GM13977 (cell line): ENCODE measurements at regions of chr12 and their contacts with region 1.

Region 1: GRCh38 chr12:38332814-38333213 is 16.2 kb downstream of the ALG10B start:
- DNase-seq: no peak
- CTCF ChIP-seq: no peak

Region 2: GRCh38 chr12:38399711-38400206 is 66.9 kb after region 1 on chr12:
- in situ Hi-C with region 1: no loop called
- DNase-seq: no peak
- CTCF ChIP-seq: no peak

Region 3: GRCh38 chr12:38664661-38665269 is 332.0 kb after region 1 on chr12:
- in situ Hi-C with region 1: loop called (anchors 25 kb)
- DNase-seq: no peak
- CTCF ChIP-seq: peak; percentile 64

Region 4: DNA sequence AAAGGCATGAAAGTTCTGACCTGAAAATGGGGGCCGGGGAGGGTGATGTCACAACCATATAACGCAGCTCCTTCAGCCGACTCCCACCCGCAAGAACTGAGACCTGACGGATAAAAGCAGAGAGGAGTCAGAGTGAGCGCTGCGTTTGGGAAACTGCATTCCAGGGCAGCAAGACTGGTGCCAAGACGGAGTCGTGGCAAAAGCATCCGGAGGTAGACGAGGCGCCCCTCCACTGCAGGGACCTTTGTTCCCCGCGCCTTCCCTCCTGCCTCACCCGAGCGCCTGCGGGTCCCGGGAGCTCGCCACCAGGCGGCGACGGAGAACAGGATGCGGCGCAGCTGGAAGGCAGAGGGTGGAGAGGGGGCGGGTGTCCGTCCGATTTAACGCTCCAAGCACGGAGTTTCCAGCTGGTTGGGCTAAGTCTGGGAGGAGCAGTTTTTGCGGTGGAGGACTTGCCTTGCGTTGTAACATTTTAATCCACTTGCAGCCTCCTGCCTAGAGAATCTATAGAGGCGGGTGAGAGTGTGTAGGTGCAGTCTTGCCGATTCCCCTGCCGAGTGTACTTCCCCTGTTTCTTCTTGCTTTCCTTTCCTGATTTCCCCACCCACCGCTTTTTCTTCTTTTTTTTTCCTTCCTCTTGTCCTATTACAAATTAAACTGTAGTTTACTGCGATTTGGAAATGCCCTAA is 573.8 kb after region 1 on chr12:
- in situ Hi-C with region 1: loop called (anchors 25 kb)
- DNase-seq: peak; percentile 70
- CTCF ChIP-seq: peak; percentile 94

Region 5: DNA sequence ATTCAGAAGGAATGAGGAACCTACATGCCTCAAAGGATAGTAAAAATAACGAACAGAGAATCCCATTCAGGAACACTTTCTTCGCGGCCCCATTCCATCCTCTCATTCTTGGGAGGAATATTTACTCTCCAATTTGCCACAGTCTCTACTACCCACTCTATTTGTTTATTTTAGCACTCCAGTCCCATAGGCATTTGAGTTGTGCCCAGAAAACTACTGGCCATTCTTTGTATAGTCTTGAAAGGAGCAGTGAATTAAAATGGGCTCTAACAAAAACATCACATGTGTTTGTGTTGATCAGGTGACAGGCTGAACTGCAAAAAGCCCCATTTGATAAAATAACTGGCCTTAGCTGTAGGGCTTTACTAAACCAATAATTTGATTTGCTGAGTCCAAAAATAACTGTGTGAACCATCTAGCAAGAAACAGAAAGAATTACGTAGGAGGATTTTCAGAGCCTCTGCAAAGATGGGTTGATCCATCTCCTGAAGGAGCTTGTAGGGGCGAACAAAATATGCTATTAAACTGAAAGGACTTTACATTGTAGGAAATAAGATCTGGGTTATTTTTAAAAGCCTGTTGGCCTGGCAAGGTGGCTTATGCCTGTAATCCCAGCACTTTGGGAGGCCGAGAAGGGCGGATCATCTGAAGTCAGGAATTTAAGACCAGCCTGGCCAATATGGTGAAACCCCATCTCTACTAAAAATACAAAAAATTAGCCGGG is 714.9 kb after region 1 on chr12:
- in situ Hi-C with region 1: no loop called
- DNase-seq: no peak
- CTCF ChIP-seq: no peak

Region 6: GRCh38 chr12:39272871-39273770 is 940.3 kb after region 1 on chr12:
- in situ Hi-C with region 1: loop called (anchors 25 kb)
- DNase-seq: peak; percentile 14
- CTCF ChIP-seq: peak; percentile 65